ENCODE measurements at regions of chr17 and their contacts with region 1.

Region 1: DNA sequence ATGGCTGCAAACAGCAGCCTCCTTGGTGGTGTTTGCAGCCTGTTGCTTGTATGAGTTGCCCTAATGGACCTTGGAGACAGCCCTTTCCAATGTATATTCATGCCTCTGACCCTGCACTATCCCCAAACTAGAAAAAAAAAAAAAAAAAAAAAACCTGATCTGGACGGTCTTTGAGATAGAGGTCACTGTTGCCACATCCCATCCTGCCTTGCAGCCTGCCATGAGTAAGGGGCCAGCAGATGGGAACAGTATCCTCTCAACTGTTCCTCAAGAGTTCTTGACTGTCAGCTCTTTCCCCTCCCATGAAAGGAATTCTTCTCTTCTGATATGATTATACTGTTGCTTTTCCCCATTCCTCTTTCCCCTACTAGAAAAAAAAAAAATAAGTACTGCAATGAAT is 152.4 kb downstream of the SSH2 start:
- DNase-seq: no peak
- H3K4me3 ChIP-seq: no peak overlapping the region
- H3K4me3 Mint-ChIP-seq: no peak overlapping the region
- H3K27ac Mint-ChIP-seq: no peak overlapping the region
- H3K4me1 ChIP-seq: peaks cover 23% of the 10 kb centered on the region
- H3K4me1 Mint-ChIP-seq: peaks cover 8% of the 10 kb centered on the region
- H3K27me3 ChIP-seq: no peaks in the 10 kb centered on the region
- H3K27me3 Mint-ChIP-seq: no peaks in the 10 kb centered on the region
- CTCF ChIP-seq: no peak

Region 2: GRCh38 chr17:29579866-29580771 is 197.5 kb before region 1 on chr17:
- CTCF ChIA-PET with region 1: no interaction called
- POLR2A ChIA-PET with region 1: no interaction called
- intact Hi-C with region 1: loop called (anchors 2 kb)
- DNase-seq: peak; percentile 75 to 84
- H3K4me3 ChIP-seq: no peak overlapping the region
- H3K4me3 Mint-ChIP-seq: no peak overlapping the region
- H3K27ac Mint-ChIP-seq: no peak overlapping the region
- H3K4me1 ChIP-seq: peaks cover under 1% of the 10 kb centered on the region
- H3K4me1 Mint-ChIP-seq: no peaks in the 10 kb centered on the region
- H3K27me3 ChIP-seq: no peaks in the 10 kb centered on the region
- H3K27me3 Mint-ChIP-seq: no peaks in the 10 kb centered on the region
- CTCF ChIP-seq: peak; percentile 82 to 88

Region 3: DNA sequence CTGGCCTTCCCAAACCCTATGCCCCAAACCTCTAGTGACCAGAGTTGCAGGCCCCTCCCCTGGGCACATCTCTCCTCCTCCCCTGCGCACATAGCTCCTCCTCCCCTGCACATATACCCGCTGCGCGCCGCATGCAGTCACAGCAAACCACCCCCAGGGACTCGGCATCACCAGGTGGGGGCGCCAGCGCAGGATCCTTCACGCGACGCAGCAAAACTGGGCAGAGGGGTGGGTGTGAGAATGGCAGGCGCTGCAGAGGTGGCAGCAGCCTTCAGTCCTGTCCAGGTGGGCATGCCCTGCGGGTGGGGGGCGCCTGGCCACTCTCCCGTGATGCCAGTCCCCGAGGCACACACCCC is 160.6 kb before region 1 on chr17:
- CTCF ChIA-PET with region 1: interaction called, 10 read pairs
- POLR2A ChIA-PET with region 1: no interaction called
- intact Hi-C with region 1: loop called (anchors 5 kb)
- DNase-seq: peak; percentile 85 to 87
- H3K4me3 ChIP-seq: peak overlapping the region; percentile 42
- H3K4me3 Mint-ChIP-seq: peak overlapping the region; percentile 87
- H3K27ac Mint-ChIP-seq: peak overlapping the region; percentile 19
- H3K4me1 ChIP-seq: peaks cover 23% of the 10 kb centered on the region
- H3K4me1 Mint-ChIP-seq: peaks cover 9% of the 10 kb centered on the region
- H3K27me3 ChIP-seq: peaks cover 8% of the 10 kb centered on the region
- H3K27me3 Mint-ChIP-seq: peaks cover 5% of the 10 kb centered on the region
- CTCF ChIP-seq: peak; percentile 67 to 74

Region 4: GRCh38 chr17:29640413-29640812 is 137.2 kb before region 1 on chr17:
- CTCF ChIA-PET with region 1: interaction called, 89 read pairs
- POLR2A ChIA-PET with region 1: interaction called, 3 read pairs
- intact Hi-C with region 1: loop called (anchors 1 kb)
- DNase-seq: no peak
- H3K4me3 ChIP-seq: no peak overlapping the region
- H3K4me3 Mint-ChIP-seq: no peak overlapping the region
- H3K27ac Mint-ChIP-seq: peak overlapping the region; percentile 7
- H3K4me1 ChIP-seq: peaks cover 13% of the 10 kb centered on the region
- H3K4me1 Mint-ChIP-seq: no peaks in the 10 kb centered on the region
- H3K27me3 ChIP-seq: no peaks in the 10 kb centered on the region
- H3K27me3 Mint-ChIP-seq: no peaks in the 10 kb centered on the region
- CTCF ChIP-seq: no peak

Region 5: GRCh38 chr17:29693769-29694168 is 83.9 kb before region 1 on chr17:
- CTCF ChIA-PET with region 1: interaction called, 3 read pairs
- POLR2A ChIA-PET with region 1: no interaction called
- intact Hi-C with region 1: loop called (anchors 2 kb)
- DNase-seq: no peak
- H3K4me3 ChIP-seq: no peak overlapping the region
- H3K4me3 Mint-ChIP-seq: no peak overlapping the region
- H3K27ac Mint-ChIP-seq: no peak overlapping the region
- H3K4me1 ChIP-seq: no peaks in the 10 kb centered on the region
- H3K4me1 Mint-ChIP-seq: no peaks in the 10 kb centered on the region
- H3K27me3 ChIP-seq: no peaks in the 10 kb centered on the region
- H3K27me3 Mint-ChIP-seq: no peaks in the 10 kb centered on the region
- CTCF ChIP-seq: no peak

Region 6: GRCh38 chr17:29740017-29740416 is 37.6 kb before region 1 on chr17:
- CTCF ChIA-PET with region 1: no interaction called
- POLR2A ChIA-PET with region 1: no interaction called
- intact Hi-C with region 1: loop called (anchors 5 kb)
- DNase-seq: peak; percentile 54 to 57
- H3K4me3 ChIP-seq: no peak overlapping the region
- H3K4me3 Mint-ChIP-seq: peak overlapping the region; percentile 42
- H3K27ac Mint-ChIP-seq: peak overlapping the region; percentile 55
- H3K4me1 ChIP-seq: peaks cover 38% of the 10 kb centered on the region
- H3K4me1 Mint-ChIP-seq: peaks cover 23% of the 10 kb centered on the region
- H3K27me3 ChIP-seq: no peaks in the 10 kb centered on the region
- H3K27me3 Mint-ChIP-seq: no peaks in the 10 kb centered on the region
- CTCF ChIP-seq: no peak

Region 7: GRCh38 chr17:29807520-29808351 is 30.1 kb after region 1 on chr17:
- CTCF ChIA-PET with region 1: interaction called, 12 read pairs
- POLR2A ChIA-PET with region 1: no interaction called
- intact Hi-C with region 1: no loop called
- DNase-seq: peak; percentile 70 to 80
- H3K4me3 ChIP-seq: no peak overlapping the region
- H3K4me3 Mint-ChIP-seq: no peak overlapping the region
- H3K27ac Mint-ChIP-seq: no peak overlapping the region
- H3K4me1 ChIP-seq: no peaks in the 10 kb centered on the region
- H3K4me1 Mint-ChIP-seq: no peaks in the 10 kb centered on the region
- H3K27me3 ChIP-seq: no peaks in the 10 kb centered on the region
- H3K27me3 Mint-ChIP-seq: no peaks in the 10 kb centered on the region
- CTCF ChIP-seq: peak; percentile 85 to 87

Region 8: GRCh38 chr17:29825604-29826003 is 47.9 kb after region 1 on chr17:
- CTCF ChIA-PET with region 1: no interaction called
- POLR2A ChIA-PET with region 1: no interaction called
- intact Hi-C with region 1: no loop called
- DNase-seq: peak in 1 of 2 experiments; percentile 43
- H3K4me3 ChIP-seq: no peak overlapping the region
- H3K4me3 Mint-ChIP-seq: no peak overlapping the region
- H3K27ac Mint-ChIP-seq: no peak overlapping the region
- H3K4me1 ChIP-seq: peaks cover 19% of the 10 kb centered on the region
- H3K4me1 Mint-ChIP-seq: peaks cover 8% of the 10 kb centered on the region
- H3K27me3 ChIP-seq: no peaks in the 10 kb centered on the region
- H3K27me3 Mint-ChIP-seq: no peaks in the 10 kb centered on the region
- CTCF ChIP-seq: no peak

Measured in Caco-2 (cell line).